Endothelial cell of umbilical vein (primary cell): ENCODE measurements at regions of chr10 and their contacts with region 1.

Region 1: DNA sequence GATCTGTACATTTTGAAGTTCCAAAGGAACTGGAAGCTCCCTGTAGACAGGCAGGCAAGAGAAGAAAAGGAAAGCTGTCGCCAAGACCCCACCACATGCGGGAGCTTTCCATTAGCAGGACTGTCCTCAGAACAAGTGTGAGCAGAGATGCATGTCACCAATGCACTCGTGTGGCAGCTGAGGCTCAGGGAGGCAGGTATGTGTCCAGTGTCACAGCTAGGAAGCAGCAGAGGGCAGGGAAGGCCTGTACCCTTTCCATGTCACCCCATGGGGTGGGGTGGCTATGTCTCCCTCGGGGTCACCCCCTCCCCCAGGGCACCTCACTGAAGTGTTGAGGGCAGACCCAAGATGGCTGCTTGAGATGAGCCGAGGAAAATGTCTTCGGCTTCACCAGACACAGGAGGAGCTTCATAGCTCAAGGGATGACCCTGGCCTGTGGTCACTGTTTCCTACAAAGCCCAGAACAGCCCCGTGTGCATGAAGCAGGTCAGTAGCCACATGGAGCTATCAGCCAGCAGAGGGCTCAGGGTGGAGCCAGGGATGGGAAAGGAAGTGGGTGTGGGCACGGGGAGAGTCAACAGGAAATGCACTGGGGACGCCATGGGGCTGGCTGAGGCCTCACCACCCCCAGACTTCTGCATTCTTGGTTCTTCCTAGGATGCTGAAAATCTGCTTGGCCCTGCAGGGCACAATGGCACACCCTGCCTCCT is 96.6 kb downstream of the FAM53B start:
- DNase-seq: peak; percentile 46
- H3K4me3 ChIP-seq: no peak overlapping the region
- H3K27ac ChIP-seq: peak overlapping the region; percentile 36
- H3K4me1 ChIP-seq: peaks cover 35% of the 10 kb centered on the region
- H3K27me3 ChIP-seq: no peaks in the 10 kb centered on the region
- CTCF ChIP-seq: peak; percentile 25
- POLR2A ChIP-seq: no peak

Region 2: DNA sequence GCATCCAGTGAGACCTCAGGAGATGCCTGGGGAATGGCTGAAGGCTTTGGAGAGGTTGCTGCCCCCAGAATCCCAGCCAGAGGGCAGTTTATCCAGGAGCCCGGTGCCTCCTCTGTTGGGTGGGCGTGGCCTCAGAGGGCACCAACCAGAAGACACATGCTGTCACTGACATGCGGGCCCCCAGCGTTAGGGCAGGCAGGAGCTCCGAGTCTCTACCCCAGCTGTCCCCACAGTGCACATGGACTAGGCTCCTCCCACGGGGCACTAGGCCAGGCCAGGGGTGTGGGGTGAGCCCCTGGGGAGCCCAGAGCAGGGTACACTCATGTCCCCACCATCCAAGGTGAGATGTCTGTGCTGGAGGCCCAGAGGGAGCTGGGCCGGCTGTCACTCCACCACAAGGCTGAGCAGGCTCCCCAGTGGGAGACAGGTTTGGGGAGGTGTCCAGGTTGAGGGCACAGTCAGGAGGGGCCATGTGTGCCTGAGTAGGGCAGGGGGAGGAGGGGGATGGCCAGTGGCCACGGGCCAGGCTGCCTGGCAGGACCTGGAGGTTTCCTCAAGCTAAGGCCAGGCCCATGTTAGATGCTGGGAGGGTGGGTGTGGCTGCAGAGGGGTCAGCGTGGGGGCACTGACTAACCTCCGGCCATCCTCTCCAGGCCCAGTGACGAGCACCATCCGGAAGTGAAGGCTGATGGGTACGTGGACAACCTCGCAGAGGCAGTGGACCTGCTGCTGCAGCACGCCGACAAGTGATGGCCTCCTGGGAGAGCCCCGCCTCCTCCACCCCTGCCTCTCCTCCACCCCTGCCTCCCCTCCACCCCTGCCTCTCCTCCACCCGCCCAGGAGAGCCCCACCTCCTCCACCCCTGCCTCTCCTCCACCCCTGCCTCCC is 34.7 kb before region 1 on chr10:
- CTCF ChIA-PET with region 1: interaction called, 3 read pairs
- POLR2A ChIA-PET with region 1: no interaction called
- dilution Hi-C with region 1: no loop called
- intact Hi-C with region 1: loop called (anchors 5 kb)
- DNase-seq: peak; percentile 48
- H3K4me3 ChIP-seq: no peak overlapping the region
- H3K27ac ChIP-seq: peak overlapping the region; percentile 20
- H3K4me1 ChIP-seq: peaks cover 7% of the 10 kb centered on the region
- H3K27me3 ChIP-seq: no peaks in the 10 kb centered on the region
- CTCF ChIP-seq: no peak
- POLR2A ChIP-seq: no peak

Region 3: GRCh38 chr10:124719213-124719851 is 71.8 kb after region 1 on chr10:
- CTCF ChIA-PET with region 1: interaction called, 11 read pairs
- POLR2A ChIA-PET with region 1: no interaction called
- dilution Hi-C with region 1: no loop called
- intact Hi-C with region 1: loop called (anchors 1 kb)
- DNase-seq: peak; percentile 84
- H3K4me3 ChIP-seq: no peak overlapping the region
- H3K27ac ChIP-seq: no peak overlapping the region
- H3K4me1 ChIP-seq: peaks cover 26% of the 10 kb centered on the region
- H3K27me3 ChIP-seq: no peaks in the 10 kb centered on the region
- CTCF ChIP-seq: peak; percentile 61 to 74
- POLR2A ChIP-seq: no peak

Region 4: DNA sequence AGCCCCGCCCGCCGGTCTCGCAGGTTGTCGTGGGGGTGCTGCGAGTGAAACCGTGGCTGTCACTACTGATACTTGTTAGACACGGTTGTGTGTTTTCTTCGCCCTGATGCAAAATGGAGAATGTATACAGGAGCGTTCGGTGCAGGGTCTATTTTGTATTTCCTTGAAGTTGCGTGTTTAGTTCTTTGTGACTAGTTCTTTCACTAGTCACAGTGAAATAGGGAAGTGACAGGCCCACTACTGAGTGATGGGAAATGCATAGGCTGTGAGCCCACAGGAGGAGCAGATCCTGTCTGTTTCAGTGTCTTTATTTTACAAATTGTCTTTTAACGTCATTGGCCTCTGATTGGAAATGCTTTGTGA is 154.7 kb after region 1 on chr10:
- CTCF ChIA-PET with region 1: no interaction called
- POLR2A ChIA-PET with region 1: no interaction called
- dilution Hi-C with region 1: no loop called
- intact Hi-C with region 1: loop called (anchors 10 kb)
- DNase-seq: peak; percentile 31
- H3K4me3 ChIP-seq: peak overlapping the region; percentile 69 to 76 (median 72)
- H3K27ac ChIP-seq: peak overlapping the region; percentile 65
- H3K4me1 ChIP-seq: peaks cover 15% of the 10 kb centered on the region
- H3K27me3 ChIP-seq: no peaks in the 10 kb centered on the region
- CTCF ChIP-seq: no peak
- POLR2A ChIP-seq: no peak